Heart right ventricle (tissue), 16 donors: ENCODE measurements at regions of chr11 and their contacts with region 1.

Region 1: DNA sequence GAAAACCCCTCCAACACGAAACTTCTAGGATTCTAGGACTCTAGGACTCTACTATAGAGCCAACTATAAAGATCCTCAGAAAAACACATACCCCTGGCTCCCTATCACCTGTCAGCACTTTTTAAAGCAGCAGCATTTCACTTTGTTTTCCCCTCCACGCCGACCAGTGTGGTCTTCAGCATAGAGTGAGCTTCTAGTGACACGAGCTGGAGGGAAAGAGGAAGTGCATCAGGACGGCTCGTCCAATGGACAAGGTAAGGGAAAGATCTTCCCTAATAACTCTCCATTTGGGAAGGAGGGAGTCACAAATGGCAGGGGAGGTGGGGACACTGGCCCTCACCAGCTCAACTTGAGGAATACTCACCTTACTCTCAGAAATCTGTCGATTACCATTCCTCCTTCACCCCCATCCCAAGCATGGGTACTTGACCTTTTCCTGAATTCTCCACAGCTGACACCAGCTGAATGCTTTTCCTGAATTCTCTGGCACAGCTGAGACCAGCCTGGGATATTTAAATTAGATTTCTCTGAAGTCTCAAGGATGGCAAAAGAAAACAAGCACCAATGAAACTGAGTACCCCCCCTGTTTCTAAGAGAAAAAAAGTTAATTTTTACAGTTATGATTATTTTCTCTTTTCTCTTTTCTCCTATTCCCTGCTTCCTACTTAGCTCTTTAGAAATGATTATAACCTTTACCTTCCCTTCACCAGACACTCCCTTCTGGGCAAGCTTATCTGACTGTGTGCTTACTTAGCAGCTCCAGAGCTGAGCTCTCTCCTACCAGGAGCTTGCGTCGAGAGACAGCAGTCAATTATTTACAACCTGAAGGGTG is 33.3 kb upstream of the NNMT start:
- DNase-seq: peak in 1 of 2 donors; percentile 43
- ATAC-seq: peak; percentile 26 to 57 (median 50)
- H3K4me3 ChIP-seq: no peak overlapping the region
- H3K27ac ChIP-seq: peak overlapping the region in 1 of 10 donors; percentile 28
- H3K4me1 ChIP-seq: peaks cover 19 to 48% (median 39%) of the 10 kb centered on the region in 9 donors
- H3K27me3 ChIP-seq: no peaks in the 10 kb centered on the region
- CTCF ChIP-seq: peak; percentile 38 to 81 (median 70)

Region 2: GRCh38 chr11:113806406-113806805 is 456.5 kb before region 1 on chr11:
- intact Hi-C with region 1: loop called in 1 of 10 experiments (anchors 10 kb)
- DNase-seq: no peak
- ATAC-seq: peak in 7 of 8 donors; percentile 25 to 76 (median 56)
- H3K4me3 ChIP-seq: no peak overlapping the region
- H3K27ac ChIP-seq: no peak overlapping the region
- H3K4me1 ChIP-seq: no peaks in the 10 kb centered on the region
- H3K27me3 ChIP-seq: no peaks in the 10 kb centered on the region
- CTCF ChIP-seq: peak in 8 of 9 donors; percentile 16 to 52 (median 38)

Region 3: DNA sequence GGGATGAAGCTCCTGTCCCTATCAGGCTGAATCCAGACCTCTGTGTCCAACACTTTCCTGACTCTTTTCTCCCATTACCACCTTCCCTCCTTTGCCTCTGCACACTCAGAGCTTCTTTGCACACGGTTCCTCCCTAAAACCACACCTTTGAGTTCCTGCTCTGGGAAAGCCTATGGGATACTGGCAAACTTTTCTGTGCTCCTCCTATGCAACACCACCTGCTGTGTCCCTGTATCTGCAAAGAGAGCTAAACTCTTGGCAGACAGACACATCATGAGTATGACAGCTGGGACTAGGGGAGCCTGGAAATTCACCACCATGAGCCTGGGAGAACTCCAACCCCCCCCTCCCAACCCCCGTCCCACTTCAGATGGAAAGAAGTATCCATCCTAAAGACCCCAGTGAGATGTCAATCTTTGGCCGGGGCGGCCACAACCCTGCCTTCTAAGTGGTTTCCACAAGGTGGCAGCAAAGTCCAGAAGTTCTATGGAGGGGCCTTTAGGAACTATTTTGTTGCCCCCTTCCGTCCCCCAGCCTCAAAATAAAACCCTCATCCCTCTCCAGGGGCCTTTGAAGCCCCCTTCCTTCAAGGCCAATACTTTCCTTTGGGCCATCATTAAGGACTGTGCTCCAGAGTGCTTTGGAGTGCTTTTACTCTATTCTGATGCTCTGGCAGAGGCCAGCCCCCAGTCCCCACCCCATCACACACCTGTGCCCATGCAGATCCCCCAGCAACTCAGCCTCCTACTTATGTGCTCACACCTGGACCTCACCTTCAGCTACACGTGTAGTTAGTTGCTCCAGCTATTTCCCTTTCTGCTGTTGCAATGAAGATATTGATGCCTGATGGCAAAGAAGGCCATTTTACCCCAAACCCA is 268.6 kb before region 1 on chr11:
- intact Hi-C with region 1: loop called (anchors 1 to 10 kb)
- DNase-seq: peak in 1 of 2 donors; percentile 18
- ATAC-seq: peak in 3 of 8 donors; percentile 31 to 51 (median 43)
- H3K4me3 ChIP-seq: no peak overlapping the region
- H3K27ac ChIP-seq: no peak overlapping the region
- H3K4me1 ChIP-seq: no peaks in the 10 kb centered on the region
- H3K27me3 ChIP-seq: peaks cover 0 to 49% (median 21%) of the 10 kb centered on the region in 7 donors
- CTCF ChIP-seq: peak; percentile 51 to 78 (median 73)